ENCODE measurements at regions of chr16 and their contacts with region 1.

Region 1: DNA sequence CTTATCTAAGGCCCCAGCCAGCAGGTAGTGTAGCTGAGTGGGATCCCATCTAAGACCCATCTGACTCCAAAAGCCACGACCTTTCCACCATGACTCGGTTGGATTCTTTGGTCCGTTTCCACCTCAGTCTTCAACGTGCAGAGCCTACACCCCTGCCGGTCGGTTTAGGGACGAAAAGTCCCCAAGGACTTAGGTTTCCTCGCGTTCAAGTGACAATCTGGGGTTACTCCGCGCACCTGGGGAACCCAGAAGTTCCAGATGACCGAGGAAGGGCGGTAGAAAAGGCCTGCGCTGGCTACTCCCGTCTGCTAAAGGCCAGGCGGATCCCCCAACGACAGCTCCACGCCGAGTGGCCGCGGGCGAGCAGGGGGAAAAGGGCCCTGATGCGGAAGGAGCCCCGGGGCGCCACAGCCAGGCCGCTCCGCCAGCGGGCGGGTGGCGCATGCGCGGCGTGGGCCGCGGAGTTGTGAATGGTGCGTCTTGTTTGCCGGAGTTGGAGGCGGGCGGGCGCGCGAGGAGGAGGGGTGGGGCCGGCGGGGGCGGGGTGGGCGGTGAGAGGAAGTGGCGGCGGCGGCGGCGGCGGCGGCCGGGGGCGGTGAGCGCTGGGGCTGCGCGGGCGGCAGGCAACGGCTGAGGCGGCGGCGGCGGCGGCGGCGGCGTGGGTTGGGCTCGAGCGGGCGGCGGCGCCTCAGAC is at the start of gene CBFB:
- DNase-seq: peak; percentile 57
- H3K4me3 ChIP-seq: peak within 1 kb of the TSS; percentile 83
- H3K27ac ChIP-seq: peak within 1 kb of the TSS; percentile 85
- H3K27me3 ChIP-seq: no peaks in the 10 kb centered on the region
- CTCF ChIP-seq: peak; percentile 11; the same call in 1 of the 2 replicates
- polyA plus RNA-seq, gene CBFB: 35.9 and 46.1 TPM in 2 replicates

Region 2: DNA sequence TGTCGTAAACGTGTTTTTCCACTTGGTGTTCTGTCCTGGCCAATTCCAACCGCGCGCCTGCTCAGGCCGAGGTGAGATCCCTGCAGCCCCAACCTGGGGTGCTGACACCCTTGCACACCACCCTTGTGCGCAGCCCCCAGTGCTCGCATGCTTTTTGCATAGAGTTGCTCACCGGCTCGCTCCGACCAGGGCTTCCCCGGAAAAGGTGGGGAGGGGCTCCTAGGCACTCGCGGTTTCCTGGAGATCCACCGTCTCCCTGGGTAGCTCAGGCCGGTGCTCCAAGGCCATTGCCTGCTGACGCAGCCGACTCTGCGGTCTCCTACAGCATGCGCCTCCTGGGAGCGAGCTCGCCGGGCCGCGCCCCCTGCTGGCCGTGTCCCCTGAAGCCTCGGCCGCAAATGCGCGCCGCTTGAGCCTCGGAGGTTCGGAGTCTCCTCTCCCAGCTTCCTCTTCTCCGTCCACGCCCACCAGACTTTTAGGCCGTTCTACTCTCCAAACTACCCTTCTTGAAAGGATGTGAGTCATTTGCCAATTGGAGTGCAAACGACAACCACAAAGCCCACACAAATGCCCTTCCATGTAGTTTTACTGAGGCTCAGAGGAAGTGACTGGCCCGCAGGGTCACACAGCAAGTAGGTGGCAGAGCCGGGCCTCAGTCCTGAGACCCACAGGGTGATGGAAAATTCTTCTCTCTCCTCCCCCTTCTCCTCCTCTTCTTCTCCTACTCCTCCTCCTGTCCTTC is 155.6 kb before region 1 on chr16:
- CTCF ChIA-PET with region 1: no interaction called
- POLR2A ChIA-PET with region 1: no interaction called
- DNase-seq: peak; percentile 94
- H3K4me3 ChIP-seq: peak overlapping the region; percentile 57
- H3K27ac ChIP-seq: peak overlapping the region; percentile 82
- H3K27me3 ChIP-seq: no peaks in the 10 kb centered on the region
- CTCF ChIP-seq: peak; percentile 94

Region 3: GRCh38 chr16:67017810-67018488 is 10.8 kb before region 1 on chr16:
- CTCF ChIA-PET with region 1: interaction called, 13 read pairs
- POLR2A ChIA-PET with region 1: interaction called, 8 read pairs
- DNase-seq: peak; percentile 77
- H3K4me3 ChIP-seq: no peak overlapping the region
- H3K27ac ChIP-seq: no peak overlapping the region
- H3K27me3 ChIP-seq: peaks cover 13% of the 10 kb centered on the region
- CTCF ChIP-seq: peak; percentile 74

Measured in AG04450 (cell line).